GM12878 (cell line): ENCODE measurements at regions of chr16 and their contacts with region 1.

Region 1: GRCh38 chr16:59341368-59341767 is 607.3 kb upstream of the GOT2 start:
- DNase-seq: no peak
- ATAC-seq: no peak
- H3K4me3 ChIP-seq: no peak overlapping the region
- H3K27ac ChIP-seq: no peak overlapping the region
- H3K4me1 ChIP-seq: no peaks in the 10 kb centered on the region
- H3K27me3 ChIP-seq: no peaks in the 10 kb centered on the region
- CTCF ChIP-seq: no peak
- EP300 ChIP-seq: no peak
- POLR2A ChIP-seq: no peak
- RAD21 ChIP-seq: no peak

Region 2: DNA sequence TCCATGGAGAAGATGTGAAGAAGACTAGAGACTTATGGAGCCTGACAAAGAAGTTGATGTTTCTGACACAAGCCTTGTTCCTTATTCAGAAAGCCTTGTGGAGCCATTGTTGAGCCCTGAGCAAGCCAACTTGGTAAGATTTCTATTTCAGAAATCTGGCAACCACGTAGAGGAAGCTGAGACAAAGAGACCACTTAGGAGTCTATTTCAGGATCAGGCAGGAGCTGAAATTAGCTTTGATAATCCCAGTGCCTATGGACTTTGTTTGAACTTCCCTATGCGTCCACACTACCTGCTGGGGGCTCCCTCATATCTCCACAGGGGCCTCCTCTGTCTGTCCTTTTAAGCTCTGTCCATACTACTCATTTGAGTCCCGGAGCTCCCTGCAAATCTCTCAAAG is 67.2 kb before region 1 on chr16:
- CTCF ChIA-PET with region 1: no interaction called
- POLR2A ChIA-PET with region 1: no interaction called
- RAD21 ChIA-PET with region 1: no interaction called
- SMC1A ChIA-PET with region 1: no interaction called
- in situ Hi-C with region 1: no loop called
- intact Hi-C with region 1: no loop called
- DNase-seq: no peak
- ATAC-seq: no peak
- H3K4me3 ChIP-seq: no peak overlapping the region
- H3K27ac ChIP-seq: no peak overlapping the region
- H3K4me1 ChIP-seq: no peaks in the 10 kb centered on the region
- H3K27me3 ChIP-seq: no peaks in the 10 kb centered on the region
- CTCF ChIP-seq: no peak
- EP300 ChIP-seq: no peak
- POLR2A ChIP-seq: no peak
- RAD21 ChIP-seq: no peak

Region 3: DNA sequence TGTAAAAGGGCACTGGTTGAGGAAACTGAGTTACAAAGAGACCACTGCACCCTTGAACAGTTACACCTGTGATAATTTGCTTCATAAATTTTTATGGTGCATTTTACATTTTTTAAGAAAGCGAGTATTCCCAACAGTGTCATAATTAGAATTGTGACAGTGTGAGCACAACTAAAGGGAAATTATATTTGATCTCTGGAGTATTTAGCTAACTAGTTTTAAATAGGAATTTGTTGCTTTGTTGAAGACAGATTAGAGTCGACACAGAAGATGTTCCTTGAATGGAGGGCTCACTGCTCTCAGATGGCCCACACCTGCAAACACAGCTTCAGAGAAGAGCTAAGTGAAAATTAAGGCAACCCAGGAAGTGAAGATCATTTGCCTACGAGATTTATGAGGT is 52.2 kb before region 1 on chr16:
- CTCF ChIA-PET with region 1: no interaction called
- POLR2A ChIA-PET with region 1: no interaction called
- RAD21 ChIA-PET with region 1: no interaction called
- SMC1A ChIA-PET with region 1: no interaction called
- in situ Hi-C with region 1: loop called (anchors 10 kb)
- intact Hi-C with region 1: no loop called
- DNase-seq: no peak
- ATAC-seq: no peak
- H3K4me3 ChIP-seq: no peak overlapping the region
- H3K27ac ChIP-seq: no peak overlapping the region
- H3K4me1 ChIP-seq: no peaks in the 10 kb centered on the region
- H3K27me3 ChIP-seq: no peaks in the 10 kb centered on the region
- CTCF ChIP-seq: no peak
- EP300 ChIP-seq: no peak
- POLR2A ChIP-seq: no peak
- RAD21 ChIP-seq: no peak

Region 4: GRCh38 chr16:59385959-59386358 is 44.6 kb after region 1 on chr16:
- CTCF ChIA-PET with region 1: no interaction called
- POLR2A ChIA-PET with region 1: no interaction called
- RAD21 ChIA-PET with region 1: no interaction called
- SMC1A ChIA-PET with region 1: no interaction called
- in situ Hi-C with region 1: no loop called
- intact Hi-C with region 1: no loop called
- DNase-seq: no peak
- ATAC-seq: no peak
- H3K4me3 ChIP-seq: no peak overlapping the region
- H3K27ac ChIP-seq: no peak overlapping the region
- H3K4me1 ChIP-seq: no peaks in the 10 kb centered on the region
- H3K27me3 ChIP-seq: no peaks in the 10 kb centered on the region
- CTCF ChIP-seq: no peak
- EP300 ChIP-seq: no peak
- POLR2A ChIP-seq: no peak
- RAD21 ChIP-seq: no peak